ENCODE measurements at regions of chr5 and their contacts with region 1.

Region 1: GRCh38 chr5:3373391-3373790 is 222.2 kb upstream of the IRX1 start:
- DNase-seq: no peak
- H3K4me3 ChIP-seq: no peak overlapping the region
- H3K27ac ChIP-seq: no peak overlapping the region
- H3K4me1 ChIP-seq: no peaks in the 10 kb centered on the region
- H3K27me3 ChIP-seq: no peaks in the 10 kb centered on the region
- CTCF ChIP-seq: no peak
- EP300 ChIP-seq: no peak
- POLR2A ChIP-seq: no peak

Region 2: GRCh38 chr5:3092664-3093063 is 280.7 kb before region 1 on chr5:
- intact Hi-C with region 1: loop called (anchors 5 kb)
- DNase-seq: no peak
- H3K4me3 ChIP-seq: no peak overlapping the region
- H3K27ac ChIP-seq: no peak overlapping the region
- H3K4me1 ChIP-seq: no peaks in the 10 kb centered on the region
- H3K27me3 ChIP-seq: no peaks in the 10 kb centered on the region
- CTCF ChIP-seq: no peak
- EP300 ChIP-seq: no peak
- POLR2A ChIP-seq: no peak

Region 3: GRCh38 chr5:3297853-3298252 is 75.5 kb before region 1 on chr5:
- intact Hi-C with region 1: no loop called
- DNase-seq: no peak
- H3K4me3 ChIP-seq: no peak overlapping the region
- H3K27ac ChIP-seq: no peak overlapping the region
- H3K4me1 ChIP-seq: no peaks in the 10 kb centered on the region
- H3K27me3 ChIP-seq: peaks cover 0 to 4% (median 0%) of the 10 kb centered on the region in 3 donors
- CTCF ChIP-seq: no peak
- EP300 ChIP-seq: no peak
- POLR2A ChIP-seq: no peak